ENCODE measurements at regions of chr10 and their contacts with region 1.

Region 1: DNA sequence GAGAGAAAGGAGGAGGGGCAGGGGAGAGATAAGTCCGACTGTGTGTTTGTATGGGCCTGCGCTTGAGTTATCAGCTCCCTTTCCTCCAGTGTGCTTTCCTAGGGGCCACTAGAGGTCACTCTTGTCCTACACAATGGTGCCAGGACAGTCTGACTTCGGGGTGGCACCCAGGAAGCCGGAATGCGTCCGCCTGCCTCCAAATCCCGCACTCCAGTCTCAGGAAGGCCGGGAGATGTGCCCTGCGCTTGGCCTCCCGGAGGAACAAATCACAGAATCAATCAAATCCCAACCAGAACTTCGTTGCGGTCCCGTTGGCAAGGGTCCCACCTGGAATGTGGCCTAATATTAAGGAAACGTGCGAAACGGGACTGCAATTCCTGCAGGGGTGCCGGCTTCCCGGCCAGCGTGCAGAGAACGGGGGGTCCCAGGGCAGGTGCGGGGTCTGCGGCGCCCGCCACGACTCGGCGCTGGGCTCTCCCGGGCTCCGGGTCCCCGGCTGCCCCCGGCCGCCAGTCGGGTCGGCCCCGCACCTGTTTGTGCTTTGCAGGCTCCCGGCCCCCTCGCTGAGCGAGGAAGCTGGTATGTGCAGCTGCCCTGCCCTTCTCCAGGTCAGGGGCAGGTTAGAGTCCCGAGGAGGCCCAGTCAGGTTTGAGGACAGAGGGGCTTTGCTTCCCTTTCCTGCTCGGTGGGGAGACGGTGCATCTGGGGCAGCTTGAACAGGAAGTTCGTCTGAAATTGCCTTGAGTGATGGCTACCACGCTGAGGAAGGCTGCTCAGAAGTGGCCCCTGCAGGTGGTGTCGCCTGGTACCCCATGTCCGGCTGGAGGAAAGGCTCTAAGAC is 21.0 kb upstream of the HPS1 start:
- DNase-seq: peak; percentile 74
- ATAC-seq: peak; percentile 97

Region 2: GRCh38 chr10:98295907-98296306 is 171.8 kb before region 1 on chr10:
- intact Hi-C with region 1: no loop called
- DNase-seq: no peak
- ATAC-seq: no peak

Region 3: GRCh38 chr10:98323221-98324164 is 144.2 kb before region 1 on chr10:
- intact Hi-C with region 1: no loop called
- DNase-seq: peak; percentile 87
- ATAC-seq: peak; percentile 94

Region 4: DNA sequence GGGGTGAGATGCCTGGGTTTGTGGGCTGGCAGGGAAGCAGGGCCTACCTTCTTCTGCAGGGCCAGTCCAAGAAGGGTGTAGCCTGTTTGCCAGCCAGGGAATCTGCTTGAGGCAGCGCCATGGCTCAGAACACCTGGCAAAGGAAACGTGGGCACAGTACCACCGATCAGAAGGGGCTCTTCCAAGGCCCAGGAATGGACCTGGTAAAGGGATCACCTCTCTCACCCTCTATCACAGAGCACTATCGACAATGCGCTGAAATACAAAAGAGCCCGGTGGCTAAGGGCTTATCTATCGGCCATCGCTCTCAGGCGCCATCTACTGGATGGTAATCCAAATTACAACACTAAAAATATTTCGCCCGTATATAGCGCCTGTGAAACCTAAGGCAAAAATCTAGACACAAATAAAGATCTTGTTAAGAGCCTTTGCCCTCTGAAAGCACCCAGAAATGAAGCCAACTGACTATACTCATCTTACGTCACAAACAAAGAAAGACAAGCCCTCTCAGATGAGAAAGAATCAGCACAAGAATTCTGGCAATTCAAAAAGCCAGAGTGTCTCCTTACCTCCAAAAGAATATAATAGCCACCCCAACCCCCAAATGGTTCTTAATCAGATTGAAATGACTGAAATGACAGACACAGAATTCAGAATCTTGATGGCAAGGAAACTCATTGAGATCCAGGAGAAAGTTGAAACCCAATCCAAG is 196.8 kb after region 1 on chr10:
- intact Hi-C with region 1: loop called (anchors 10 kb)
- DNase-seq: no peak
- ATAC-seq: no peak

Region 5: DNA sequence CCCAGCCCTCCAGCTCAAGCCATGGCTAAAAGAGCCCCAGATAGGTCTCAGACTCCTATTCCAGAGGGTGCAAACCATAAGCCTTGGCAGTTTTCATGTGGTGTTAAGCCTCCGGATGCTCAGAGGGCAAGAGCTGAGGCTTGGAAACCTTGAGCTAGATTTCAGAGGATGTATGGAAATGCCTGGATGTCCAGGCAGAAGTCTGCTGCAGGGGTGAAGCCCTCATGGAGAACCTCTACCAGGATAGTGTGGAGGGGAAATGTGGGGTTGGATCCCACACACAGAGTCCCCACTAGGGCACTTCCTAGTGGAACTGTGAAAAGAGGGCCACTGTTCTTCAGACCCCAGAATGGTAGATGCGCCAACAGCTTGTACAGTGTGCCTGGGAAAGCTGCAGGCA is 781.1 kb after region 1 on chr10:
- intact Hi-C with region 1: loop called (anchors 5 kb)
- DNase-seq: no peak
- ATAC-seq: no peak

Measured in Right ventricle myocardium superior (tissue), 1 donor.